Astrocyte of the cerebellum (primary cell): ENCODE measurements at regions of chr4 and their contacts with region 1.

Region 1: GRCh38 chr4:181909368-181909767 is 333.8 kb upstream of the TENM3 start:
- DNase-seq: peak; percentile 40
- H3K4me3 ChIP-seq: no peak overlapping the region
- CTCF ChIP-seq: no peak

Region 2: GRCh38 chr4:181962321-181962720 is 53.0 kb after region 1 on chr4:
- in situ Hi-C with region 1: loop called (anchors 5 kb)
- DNase-seq: peak; percentile 56
- H3K4me3 ChIP-seq: no peak overlapping the region
- CTCF ChIP-seq: no peak